ENCODE measurements at regions of chr14 and their contacts with region 1.

Region 1: GRCh38 chr14:66782853-66783252 is 274.9 kb downstream of the GPHN start:
- DNase-seq: no peak
- H3K4me3 Mint-ChIP-seq: no peak overlapping the region
- H3K27ac Mint-ChIP-seq: no peak overlapping the region
- H3K4me1 Mint-ChIP-seq: no peaks in the 10 kb centered on the region
- H3K27me3 Mint-ChIP-seq: no peaks in the 10 kb centered on the region

Region 2: DNA sequence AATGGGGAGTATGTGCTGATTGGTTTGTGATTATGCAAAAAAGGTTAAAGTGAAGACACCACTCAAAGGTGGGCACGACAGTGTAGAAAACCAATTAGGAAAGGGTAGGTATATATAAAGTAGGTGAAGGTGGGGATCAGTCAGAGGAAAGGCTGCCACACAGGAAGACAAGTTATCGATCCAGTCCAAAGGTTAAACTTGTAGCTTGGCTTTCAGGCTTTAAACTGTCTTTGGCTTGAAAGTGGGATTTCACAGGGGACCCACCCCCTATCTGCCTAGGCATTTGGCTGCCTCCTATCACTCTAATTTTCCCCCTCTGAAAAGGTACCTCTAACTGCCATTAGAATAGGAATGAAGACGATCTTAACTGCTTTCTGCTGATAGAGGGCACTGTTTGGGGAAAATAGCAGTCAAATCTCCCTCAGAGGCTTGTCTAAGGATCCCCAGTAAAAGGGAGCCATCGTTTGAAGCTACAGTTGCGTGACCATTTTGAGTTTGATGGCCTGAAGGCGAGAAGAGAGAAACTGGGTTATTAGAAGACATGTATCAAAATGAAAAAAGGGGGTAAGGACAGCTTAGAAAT is 24.7 kb before region 1 on chr14:
- CTCF ChIA-PET with region 1: no interaction called
- POLR2A ChIA-PET with region 1: no interaction called
- DNase-seq: no peak
- H3K4me3 Mint-ChIP-seq: no peak overlapping the region
- H3K27ac Mint-ChIP-seq: no peak overlapping the region
- H3K4me1 Mint-ChIP-seq: no peaks in the 10 kb centered on the region
- H3K27me3 Mint-ChIP-seq: no peaks in the 10 kb centered on the region

Region 3: GRCh38 chr14:66804141-66804540 is 21.3 kb after region 1 on chr14:
- CTCF ChIA-PET with region 1: interaction called, 11 read pairs
- POLR2A ChIA-PET with region 1: no interaction called
- DNase-seq: no peak
- H3K4me3 Mint-ChIP-seq: no peak overlapping the region
- H3K27ac Mint-ChIP-seq: no peak overlapping the region
- H3K4me1 Mint-ChIP-seq: no peaks in the 10 kb centered on the region
- H3K27me3 Mint-ChIP-seq: no peaks in the 10 kb centered on the region